Heart left ventricle (tissue), 16 donors: ENCODE measurements at regions of chr14 and their contacts with region 1.

Region 1: DNA sequence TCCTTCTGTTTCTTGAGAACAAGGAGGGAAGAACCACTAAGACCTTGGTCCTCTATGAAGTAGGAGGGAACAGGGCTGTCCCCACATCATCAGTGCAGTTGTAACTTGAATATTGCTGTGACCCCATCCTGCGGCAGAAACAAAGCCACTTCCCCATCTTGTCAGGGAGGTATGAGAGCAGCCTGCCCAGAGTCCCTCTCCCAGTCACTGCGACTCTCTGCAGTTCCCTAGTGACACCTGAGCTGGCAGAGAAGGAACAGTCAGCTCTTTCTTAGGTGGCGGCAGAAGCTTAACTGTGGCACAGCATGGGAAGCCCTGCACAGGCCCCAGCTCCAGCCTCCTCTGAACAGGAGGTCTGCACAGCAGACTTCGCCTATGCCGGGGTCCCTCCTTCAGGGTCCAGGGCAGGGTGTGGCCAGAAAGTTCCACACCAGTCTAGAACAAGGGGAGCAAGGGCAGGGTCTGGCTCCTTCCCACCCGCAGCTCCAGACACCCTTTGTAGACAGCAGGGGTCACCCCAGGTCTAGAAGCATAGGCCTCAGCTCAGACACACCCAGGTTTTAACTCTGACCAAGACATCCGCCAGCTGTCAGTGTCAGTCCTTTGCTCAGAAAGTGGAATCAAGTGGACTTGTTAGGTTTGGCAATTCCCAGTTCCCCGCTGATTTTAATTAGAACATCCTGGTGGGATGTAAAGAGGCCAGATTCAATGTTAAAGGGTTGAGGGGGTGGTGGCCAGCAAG is 36.8 kb downstream of the DEGS2 start:
- DNase-seq: no peak
- ATAC-seq: peak in 2 of 4 donors; percentile 34 to 51
- H3K4me3 ChIP-seq: no peak overlapping the region
- H3K27ac ChIP-seq: no peak overlapping the region
- H3K4me1 ChIP-seq: peaks cover 0 to 4% (median 0%) of the 10 kb centered on the region in 12 donors
- H3K27me3 ChIP-seq: no peaks in the 10 kb centered on the region
- CTCF ChIP-seq: peak in 4 of 12 donors; percentile 6 to 24 (median 12)
- POLR2A ChIP-seq: no peak

Region 2: DNA sequence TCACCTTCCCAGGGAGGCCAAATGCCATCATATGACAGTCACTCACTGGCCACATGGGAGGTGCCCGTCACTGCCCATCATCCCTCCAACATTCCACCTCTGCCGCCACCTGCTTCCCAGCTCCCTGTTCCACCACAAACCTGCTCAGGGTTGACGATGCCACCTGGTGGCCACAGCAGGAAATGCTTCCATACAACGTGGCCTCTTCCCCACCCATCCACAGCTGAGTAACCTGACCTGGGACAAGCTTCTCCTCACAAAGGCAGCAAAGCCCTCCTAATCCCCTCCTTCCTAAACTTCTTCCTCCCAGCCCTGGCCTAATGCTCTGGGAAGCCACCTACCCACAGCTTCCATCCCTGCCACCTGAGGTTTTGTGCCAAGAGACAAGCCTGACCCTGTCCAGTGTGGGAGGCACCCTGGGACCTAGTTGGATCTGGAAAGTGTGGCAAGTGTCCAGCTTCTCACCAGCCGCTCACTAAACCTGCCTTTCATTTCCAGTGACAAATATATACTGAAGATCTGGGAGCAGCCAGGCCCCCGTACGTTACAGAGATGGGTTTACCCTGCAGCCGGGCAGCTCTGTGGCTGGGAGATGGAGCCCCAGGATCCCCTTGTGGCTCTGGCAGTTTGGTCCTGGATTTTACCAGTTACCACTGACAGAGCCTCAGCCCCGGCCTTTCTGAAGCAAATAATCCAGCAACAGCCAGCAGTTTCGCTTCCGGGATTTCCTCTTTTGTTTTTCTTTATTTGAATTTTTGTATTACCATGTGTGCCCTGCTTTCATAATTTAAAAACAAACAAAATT is 32.6 kb after region 1 on chr14:
- intact Hi-C with region 1: no loop called
- DNase-seq: no peak
- ATAC-seq: peak in 1 of 4 donors; percentile 11
- H3K4me3 ChIP-seq: no peak overlapping the region
- H3K27ac ChIP-seq: no peak overlapping the region
- H3K4me1 ChIP-seq: peaks cover 0 to 15% (median 7%) of the 10 kb centered on the region in 12 donors
- H3K27me3 ChIP-seq: peaks cover 17 to 36% (median 23%) of the 10 kb centered on the region in 9 donors
- CTCF ChIP-seq: peak in 11 of 12 donors; percentile 13 to 48 (median 43)
- POLR2A ChIP-seq: no peak

Region 3: GRCh38 chr14:100192672-100193416 is 70.2 kb after region 1 on chr14:
- intact Hi-C with region 1: loop called in 1 of 10 experiments (anchors 5 kb)
- DNase-seq: peak; percentile 99 to 100 (median 99)
- ATAC-seq: peak; percentile 99 to 100 (median 100)
- H3K4me3 ChIP-seq: peak overlapping the region in 11 of 12 donors; percentile 16 to 63 (median 52)
- H3K27ac ChIP-seq: peak overlapping the region; percentile 80 to 97 (median 90)
- H3K4me1 ChIP-seq: peaks cover 0 to 21% (median 14%) of the 10 kb centered on the region in 12 donors
- H3K27me3 ChIP-seq: no peaks in the 10 kb centered on the region
- CTCF ChIP-seq: peak; percentile 89 to 98 (median 96)
- POLR2A ChIP-seq: peak in 1 of 2 donors; percentile 58